ENCODE measurements at regions of chr2 and their contacts with region 1.

Region 1: DNA sequence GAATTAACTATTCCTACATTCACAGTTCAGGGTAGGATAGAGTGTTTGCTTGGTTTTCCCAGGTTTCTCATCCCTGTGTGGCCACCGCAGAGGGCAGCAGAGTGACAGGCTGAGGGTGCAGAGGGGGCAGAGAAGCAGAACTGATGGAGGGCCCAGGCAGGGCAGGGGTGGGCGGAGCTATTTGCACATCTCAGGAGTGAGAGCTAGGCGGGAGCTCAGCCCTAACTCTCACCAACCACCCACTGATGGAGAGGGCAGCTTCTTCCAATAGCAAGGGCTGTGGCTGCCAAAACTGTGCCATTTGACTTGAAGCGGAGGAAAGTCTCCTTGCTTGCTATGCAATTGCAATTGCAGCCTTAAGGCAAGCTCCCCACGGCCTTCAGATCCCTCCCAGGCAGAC is 12.0 kb upstream of the DARS1 start:
- DNase-seq: peak; percentile 77
- H3K4me3 ChIP-seq: peak overlapping the region; percentile 30
- H3K27ac ChIP-seq: peak overlapping the region; percentile 58
- H3K4me1 ChIP-seq: peaks cover 55% of the 10 kb centered on the region
- CTCF ChIP-seq: peak; percentile 84

Region 2: GRCh38 chr2:135985018-135985825 is 12.2 kb before region 1 on chr2 and contains the start of gene DARS1:
- CTCF ChIA-PET with region 1: interaction called, 6 read pairs
- POLR2A ChIA-PET with region 1: interaction called, 43 read pairs
- intact Hi-C with region 1: no loop called
- DNase-seq: peak; percentile 93
- H3K4me3 ChIP-seq: peak within 1 kb of the TSS; percentile 85
- H3K27ac ChIP-seq: peak within 1 kb of the TSS; percentile 79
- H3K4me1 ChIP-seq: peaks cover 49% of the 10 kb centered on the region
- CTCF ChIP-seq: no peak
- total RNA-seq, gene DARS1: 90.5 and 108 TPM in 2 replicates

Region 3: GRCh38 chr2:136059036-136059472 is 61.7 kb after region 1 on chr2:
- CTCF ChIA-PET with region 1: interaction called, 3 read pairs
- POLR2A ChIA-PET with region 1: interaction called, 26 read pairs
- intact Hi-C with region 1: no loop called
- DNase-seq: peak; percentile 59
- H3K4me3 ChIP-seq: no peak overlapping the region
- H3K27ac ChIP-seq: peak overlapping the region; percentile 6
- H3K4me1 ChIP-seq: peaks cover 54% of the 10 kb centered on the region
- CTCF ChIP-seq: no peak

Region 4: GRCh38 chr2:136117909-136118818 is 120.8 kb after region 1 on chr2 and contains the start of gene CXCR4:
- CTCF ChIA-PET with region 1: no interaction called
- POLR2A ChIA-PET with region 1: interaction called, 6 read pairs
- intact Hi-C with region 1: loop called (anchors 2 kb)
- DNase-seq: peak; percentile 89
- H3K4me3 ChIP-seq: peak within 1 kb of the TSS; percentile 92
- H3K27ac ChIP-seq: peak within 1 kb of the TSS; percentile 92
- H3K4me1 ChIP-seq: peaks cover 66% of the 10 kb centered on the region
- CTCF ChIP-seq: peak; percentile 33; the same call in 1 of the 2 replicates
- total RNA-seq, gene CXCR4: 367 and 432 TPM in 2 replicates

Region 5: GRCh38 chr2:136162438-136162837 is 165.1 kb after region 1 on chr2:
- CTCF ChIA-PET with region 1: no interaction called
- POLR2A ChIA-PET with region 1: no interaction called
- intact Hi-C with region 1: no loop called
- DNase-seq: no peak
- H3K4me3 ChIP-seq: no peak overlapping the region
- H3K27ac ChIP-seq: no peak overlapping the region
- H3K4me1 ChIP-seq: peaks cover 18% of the 10 kb centered on the region
- CTCF ChIP-seq: no peak

Region 6: DNA sequence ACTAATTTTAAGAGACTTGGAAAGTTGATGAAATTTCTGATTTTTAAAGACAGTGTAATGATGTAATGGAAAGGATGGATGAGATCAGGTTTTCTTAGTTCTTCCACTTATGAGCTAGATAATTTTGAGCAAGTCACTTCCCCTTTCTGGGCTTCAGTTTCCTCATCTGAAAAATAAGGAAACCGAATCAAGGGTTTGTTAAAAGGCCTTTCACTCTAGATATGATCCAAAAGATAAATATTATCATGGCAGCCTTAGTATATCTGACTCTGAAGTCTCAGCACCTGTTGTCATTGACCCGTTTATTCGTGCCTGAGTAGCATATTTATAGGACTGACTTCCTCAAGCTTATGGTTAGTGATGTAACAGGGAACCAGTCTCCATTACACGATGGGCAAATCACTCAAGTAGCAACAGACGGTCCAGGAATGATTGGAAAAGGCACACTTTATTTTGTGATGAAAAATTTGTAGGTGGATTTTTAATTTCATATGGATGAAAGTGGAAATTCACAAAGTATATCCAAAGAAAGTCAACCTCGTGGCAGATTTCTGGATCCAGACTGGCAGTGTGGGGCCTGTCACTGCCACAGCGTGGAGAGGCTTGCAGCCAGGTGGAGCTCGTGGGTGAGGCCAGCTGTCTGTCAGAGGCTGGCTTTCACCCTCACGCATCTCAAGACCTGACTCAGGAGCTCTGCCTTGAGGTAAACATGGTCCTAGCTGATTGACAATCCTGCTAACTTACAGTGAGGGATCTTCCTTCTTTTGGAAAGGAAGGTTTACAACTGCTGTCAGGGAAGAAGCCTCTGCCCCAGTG is 258.5 kb after region 1 on chr2:
- CTCF ChIA-PET with region 1: interaction called, 3 read pairs
- POLR2A ChIA-PET with region 1: interaction called, 10 read pairs
- intact Hi-C with region 1: loop called (anchors 5 kb)
- DNase-seq: peak; percentile 85
- H3K4me3 ChIP-seq: peak overlapping the region; percentile 26
- H3K27ac ChIP-seq: peak overlapping the region; percentile 79
- H3K4me1 ChIP-seq: peaks cover 72% of the 10 kb centered on the region
- CTCF ChIP-seq: peak; percentile 80